ENCODE measurements at regions of chr2 and their contacts with region 1.

Region 1: GRCh38 chr2:156435715-156436496 is at the start of gene GPD2:
- DNase-seq: peak; percentile 82
- ATAC-seq: peak; percentile 76
- H3K4me3 ChIP-seq: peak within 1 kb of the TSS; percentile 71 to 89 (median 74)
- H3K4me3 Mint-ChIP-seq: peak within 1 kb of the TSS; percentile 91
- H3K27ac ChIP-seq: peak within 1 kb of the TSS; percentile 62 to 85
- H3K27ac Mint-ChIP-seq: peak within 1 kb of the TSS; percentile 88
- H3K4me1 ChIP-seq: peaks cover 17 to 26% of the 10 kb centered on the region in 2 donors
- H3K4me1 Mint-ChIP-seq: peaks cover 34% of the 10 kb centered on the region
- H3K27me3 ChIP-seq: no peaks in the 10 kb centered on the region
- H3K27me3 Mint-ChIP-seq: no peaks in the 10 kb centered on the region
- CTCF ChIP-seq: no peak
- total RNA-seq, gene GPD2: 18.7 and 26.8 TPM in 2 replicates

Region 2: DNA sequence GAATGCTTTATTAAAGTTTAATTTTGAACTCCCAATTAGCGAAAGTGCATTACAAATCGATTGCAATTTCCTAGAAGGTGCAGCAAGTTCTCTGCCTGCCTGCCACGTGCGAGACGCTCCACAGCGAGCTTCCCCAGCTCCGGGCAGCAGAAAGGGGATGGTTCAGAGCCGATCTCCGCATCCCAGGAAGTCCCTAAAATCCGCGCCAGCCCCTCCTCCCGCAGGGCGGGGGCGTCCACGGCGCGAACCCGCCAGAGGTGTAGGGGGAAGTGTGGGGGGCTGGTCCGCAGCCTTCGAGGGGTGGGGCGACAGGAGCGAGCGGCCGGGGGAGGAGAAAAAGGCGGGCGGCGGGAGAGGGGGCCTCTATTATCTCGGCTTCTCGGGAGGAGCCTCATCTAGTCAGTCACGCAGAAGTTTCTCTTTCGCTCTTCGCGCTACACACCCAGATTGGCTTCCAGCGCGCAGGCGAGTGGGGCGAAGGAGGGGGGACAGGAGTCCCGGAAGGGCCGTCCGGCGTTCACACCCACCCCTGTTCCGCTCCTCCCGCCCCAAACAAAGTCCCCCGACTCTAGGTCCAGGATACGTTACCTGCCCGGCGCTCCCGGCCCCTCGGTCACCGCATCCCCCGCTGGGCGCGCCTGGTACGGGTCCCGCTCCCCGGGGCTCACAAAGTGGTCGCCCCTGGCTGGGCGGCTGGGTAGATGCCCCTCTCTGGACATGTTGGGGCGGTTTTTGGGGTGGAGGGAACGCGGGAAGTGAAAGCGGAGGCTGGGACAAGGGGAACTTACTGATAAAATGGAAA is 94.3 kb before region 1 on chr2:
- CTCF ChIA-PET with region 1: no interaction called
- POLR2A ChIA-PET with region 1: interaction called, 13 read pairs
- intact Hi-C with region 1: loop called (anchors 1 kb)
- DNase-seq: peak; percentile 94
- ATAC-seq: peak; percentile 73
- H3K4me3 ChIP-seq: peak overlapping the region; percentile 81 to 96 (median 84)
- H3K4me3 Mint-ChIP-seq: peak overlapping the region; percentile 93
- H3K27ac ChIP-seq: peak overlapping the region; percentile 99 to 100
- H3K27ac Mint-ChIP-seq: peak overlapping the region; percentile 99
- H3K4me1 ChIP-seq: peaks cover 13 to 14% of the 10 kb centered on the region in 2 donors
- H3K4me1 Mint-ChIP-seq: peaks cover 25% of the 10 kb centered on the region
- H3K27me3 ChIP-seq: no peaks in the 10 kb centered on the region
- H3K27me3 Mint-ChIP-seq: no peaks in the 10 kb centered on the region
- CTCF ChIP-seq: no peak

Region 3: GRCh38 chr2:156400706-156401678 is 34.9 kb before region 1 on chr2:
- CTCF ChIA-PET with region 1: interaction called, 4 read pairs
- POLR2A ChIA-PET with region 1: interaction called, 6 read pairs
- intact Hi-C with region 1: loop called (anchors 1 kb)
- DNase-seq: peak; percentile 92
- ATAC-seq: peak; percentile 77
- H3K4me3 ChIP-seq: peak overlapping the region; percentile 61 to 100 (median 76)
- H3K4me3 Mint-ChIP-seq: peak overlapping the region; percentile 95
- H3K27ac ChIP-seq: peak overlapping the region; percentile 91 to 98
- H3K27ac Mint-ChIP-seq: peak overlapping the region; percentile 98
- H3K4me1 ChIP-seq: peaks cover 10 to 24% of the 10 kb centered on the region in 2 donors
- H3K4me1 Mint-ChIP-seq: peaks cover 28% of the 10 kb centered on the region
- H3K27me3 ChIP-seq: no peaks in the 10 kb centered on the region
- H3K27me3 Mint-ChIP-seq: peaks cover 6% of the 10 kb centered on the region
- CTCF ChIP-seq: no peak

Region 4: GRCh38 chr2:156472686-156473085 is 36.8 kb after region 1 on chr2:
- CTCF ChIA-PET with region 1: no interaction called
- POLR2A ChIA-PET with region 1: no interaction called
- intact Hi-C with region 1: loop called (anchors 5 kb)
- DNase-seq: peak; percentile 35
- ATAC-seq: peak; percentile 60
- H3K4me3 ChIP-seq: no peak overlapping the region
- H3K4me3 Mint-ChIP-seq: no peak overlapping the region
- H3K27ac ChIP-seq: no peak overlapping the region
- H3K27ac Mint-ChIP-seq: peak overlapping the region; percentile 16
- H3K4me1 ChIP-seq: peaks cover 22 to 24% of the 10 kb centered on the region in 2 donors
- H3K4me1 Mint-ChIP-seq: peaks cover 45% of the 10 kb centered on the region
- H3K27me3 ChIP-seq: no peaks in the 10 kb centered on the region
- H3K27me3 Mint-ChIP-seq: no peaks in the 10 kb centered on the region
- CTCF ChIP-seq: no peak

Region 5: DNA sequence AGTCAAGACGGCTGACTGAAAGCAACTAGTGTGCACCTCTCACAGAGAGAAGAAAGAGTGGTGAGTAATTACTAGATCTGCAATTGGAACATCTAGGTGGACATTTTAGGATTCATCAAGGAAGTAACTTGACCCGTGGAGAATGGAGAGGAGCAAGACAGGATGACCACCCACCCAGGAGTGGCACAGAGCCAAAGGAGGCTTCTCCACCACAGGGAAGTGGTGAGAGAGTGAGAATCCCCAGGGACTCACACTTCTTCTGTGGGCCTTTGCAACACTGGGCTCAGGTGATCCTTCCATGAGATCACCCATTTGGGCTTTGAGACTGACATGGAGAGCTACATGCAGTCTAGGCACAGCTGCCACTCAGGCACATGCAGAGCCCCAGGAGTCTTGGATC is 688.8 kb after region 1 on chr2:
- CTCF ChIA-PET with region 1: no interaction called
- POLR2A ChIA-PET with region 1: no interaction called
- intact Hi-C with region 1: no loop called
- DNase-seq: no peak
- ATAC-seq: no peak
- H3K4me3 ChIP-seq: no peak overlapping the region
- H3K4me3 Mint-ChIP-seq: no peak overlapping the region
- H3K27ac ChIP-seq: no peak overlapping the region
- H3K27ac Mint-ChIP-seq: no peak overlapping the region
- H3K4me1 ChIP-seq: no peaks in the 10 kb centered on the region
- H3K4me1 Mint-ChIP-seq: no peaks in the 10 kb centered on the region
- H3K27me3 ChIP-seq: no peaks in the 10 kb centered on the region
- H3K27me3 Mint-ChIP-seq: peaks cover 4% of the 10 kb centered on the region
- CTCF ChIP-seq: no peak

Measured in B cell (primary cell).